ENCODE measurements at regions of chr5 and their contacts with region 1.

Region 1: GRCh38 chr5:134215757-134216156 is 10.1 kb downstream of the PPP2CA start:
- DNase-seq: no peak
- ATAC-seq: no peak
- H3K4me3 ChIP-seq: no peak overlapping the region
- H3K27ac ChIP-seq: no peak overlapping the region
- H3K4me1 ChIP-seq: peaks cover 8 to 25% of the 10 kb centered on the region in 2 experiments
- H3K27me3 ChIP-seq: no peaks in the 10 kb centered on the region
- CTCF ChIP-seq: no peak
- POLR2A ChIP-seq: no peak
- RAD21 ChIP-seq: no peak

Region 2: GRCh38 chr5:134225618-134226440 is 10.1 kb after region 1 on chr5 and contains the start of gene PPP2CA:
- CTCF ChIA-PET with region 1: interaction called, 3 read pairs
- POLR2A ChIA-PET with region 1: interaction called, 10 read pairs
- RAD21 ChIA-PET with region 1: no interaction called
- intact Hi-C with region 1: no loop called
- DNase-seq: peak; percentile 97
- ATAC-seq: peak; percentile 87
- H3K4me3 ChIP-seq: peak within 1 kb of the TSS; percentile 83 to 95
- H3K27ac ChIP-seq: peak within 1 kb of the TSS; percentile 98
- H3K4me1 ChIP-seq: peaks cover 9 to 32% of the 10 kb centered on the region in 2 experiments
- H3K27me3 ChIP-seq: no peaks in the 10 kb centered on the region
- CTCF ChIP-seq: no peak
- POLR2A ChIP-seq: peak; percentile 46
- RAD21 ChIP-seq: no peak
- total RNA-seq, gene PPP2CA: 167 TPM

Measured in HCT116 (cell line).